CD8-positive, alpha-beta T cell (primary cell): ENCODE measurements at regions of chr5 and their contacts with region 1.

Region 1: DNA sequence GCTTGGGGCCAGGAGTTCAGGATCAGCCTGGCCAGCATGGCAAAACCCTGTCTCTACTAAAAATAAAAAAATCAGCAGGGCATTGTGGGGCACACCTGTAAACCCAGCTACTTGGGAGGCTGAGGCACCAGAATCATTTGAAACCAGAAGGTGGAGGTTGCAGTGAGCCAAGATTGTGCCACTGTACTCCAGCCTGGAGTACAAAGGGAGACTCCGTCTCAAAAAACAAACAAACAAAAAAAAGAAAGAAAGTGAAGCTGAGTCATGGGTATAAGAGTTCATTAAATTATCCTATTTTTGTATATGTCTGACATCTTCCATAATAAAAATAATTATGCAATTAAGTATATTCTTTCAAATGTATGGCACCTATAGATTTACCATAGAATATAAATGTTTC is 37.2 kb downstream of the CHD1 start:
- DNase-seq: no peak
- ATAC-seq: no peak
- H3K4me3 ChIP-seq: no peak overlapping the region
- H3K4me3 Mint-ChIP-seq: no peak overlapping the region
- H3K27ac ChIP-seq: no peak overlapping the region
- H3K27ac Mint-ChIP-seq: no peak overlapping the region
- H3K4me1 ChIP-seq: no peaks in the 10 kb centered on the region
- H3K4me1 Mint-ChIP-seq: peaks cover 2% of the 10 kb centered on the region
- H3K27me3 ChIP-seq: no peaks in the 10 kb centered on the region
- H3K27me3 Mint-ChIP-seq: no peaks in the 10 kb centered on the region
- CTCF ChIP-seq: no peak

Region 2: DNA sequence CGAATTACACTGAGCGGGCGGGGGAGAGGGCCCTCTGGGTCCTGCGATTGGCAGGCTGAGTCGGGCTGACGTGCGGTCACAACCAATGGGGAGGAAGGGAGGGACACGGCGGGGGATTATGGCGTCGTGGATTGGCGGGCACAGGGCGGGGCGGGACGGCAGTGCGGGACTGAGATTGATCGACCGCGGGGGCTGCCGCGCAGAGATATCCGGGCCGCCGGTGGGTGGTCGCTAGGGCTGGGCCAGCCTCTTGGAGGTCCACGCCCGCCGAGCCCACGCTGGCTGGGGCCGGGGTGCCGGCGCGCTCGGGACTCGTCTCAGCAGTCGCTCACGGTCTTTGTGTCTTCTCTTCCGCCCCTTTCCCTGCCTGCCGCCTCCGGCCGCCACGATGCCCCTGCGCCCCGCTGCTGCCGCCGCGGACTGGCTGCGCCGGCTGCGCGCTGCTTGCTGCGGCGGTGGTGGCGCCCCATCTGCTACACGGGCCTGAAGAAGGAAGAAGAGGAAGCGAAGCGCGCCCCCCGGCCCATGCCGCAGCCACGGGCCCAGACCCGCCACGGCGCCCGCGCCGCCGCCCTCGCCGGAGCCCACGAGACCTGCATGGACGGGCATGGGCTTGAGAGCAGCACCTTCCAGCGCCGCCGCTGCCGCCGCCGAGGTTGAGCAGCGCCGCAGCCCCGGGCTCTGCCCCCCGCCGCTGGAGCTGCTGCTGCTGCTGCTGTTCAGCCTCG is 118.0 kb before region 1 on chr5 and contains the start of gene RGMB:
- CTCF ChIA-PET with region 1: no interaction called
- POLR2A ChIA-PET with region 1: no interaction called
- intact Hi-C with region 1: no loop called
- DNase-seq: peak; percentile 71 to 92 (median 89)
- ATAC-seq: peak; percentile 86
- H3K4me3 ChIP-seq: peak within 1 kb of the TSS; percentile 69 to 70
- H3K4me3 Mint-ChIP-seq: peak within 1 kb of the TSS; percentile 95
- H3K27ac ChIP-seq: peak within 1 kb of the TSS; percentile 37 to 53
- H3K27ac Mint-ChIP-seq: peak within 1 kb of the TSS; percentile 87
- H3K4me1 ChIP-seq: peaks cover 41% of the 10 kb centered on the region
- H3K4me1 Mint-ChIP-seq: peaks cover 56% of the 10 kb centered on the region
- H3K27me3 ChIP-seq: peaks cover 0 to 12% of the 10 kb centered on the region in 2 experiments
- H3K27me3 Mint-ChIP-seq: peaks cover 24% of the 10 kb centered on the region
- CTCF ChIP-seq: no peak
- total RNA-seq, gene RGMB: 5.8 to 6.6 TPM

Region 3: GRCh38 chr5:98872674-98873073 is 18.9 kb before region 1 on chr5:
- CTCF ChIA-PET with region 1: interaction called, 3 read pairs
- POLR2A ChIA-PET with region 1: interaction called, 3 read pairs
- intact Hi-C with region 1: loop called (anchors 2 kb)
- DNase-seq: no peak
- ATAC-seq: no peak
- H3K4me3 ChIP-seq: no peak overlapping the region
- H3K4me3 Mint-ChIP-seq: no peak overlapping the region
- H3K27ac ChIP-seq: no peak overlapping the region
- H3K27ac Mint-ChIP-seq: no peak overlapping the region
- H3K4me1 ChIP-seq: no peaks in the 10 kb centered on the region
- H3K4me1 Mint-ChIP-seq: peaks cover 4% of the 10 kb centered on the region
- H3K27me3 ChIP-seq: no peaks in the 10 kb centered on the region
- H3K27me3 Mint-ChIP-seq: no peaks in the 10 kb centered on the region
- CTCF ChIP-seq: no peak

Region 4: DNA sequence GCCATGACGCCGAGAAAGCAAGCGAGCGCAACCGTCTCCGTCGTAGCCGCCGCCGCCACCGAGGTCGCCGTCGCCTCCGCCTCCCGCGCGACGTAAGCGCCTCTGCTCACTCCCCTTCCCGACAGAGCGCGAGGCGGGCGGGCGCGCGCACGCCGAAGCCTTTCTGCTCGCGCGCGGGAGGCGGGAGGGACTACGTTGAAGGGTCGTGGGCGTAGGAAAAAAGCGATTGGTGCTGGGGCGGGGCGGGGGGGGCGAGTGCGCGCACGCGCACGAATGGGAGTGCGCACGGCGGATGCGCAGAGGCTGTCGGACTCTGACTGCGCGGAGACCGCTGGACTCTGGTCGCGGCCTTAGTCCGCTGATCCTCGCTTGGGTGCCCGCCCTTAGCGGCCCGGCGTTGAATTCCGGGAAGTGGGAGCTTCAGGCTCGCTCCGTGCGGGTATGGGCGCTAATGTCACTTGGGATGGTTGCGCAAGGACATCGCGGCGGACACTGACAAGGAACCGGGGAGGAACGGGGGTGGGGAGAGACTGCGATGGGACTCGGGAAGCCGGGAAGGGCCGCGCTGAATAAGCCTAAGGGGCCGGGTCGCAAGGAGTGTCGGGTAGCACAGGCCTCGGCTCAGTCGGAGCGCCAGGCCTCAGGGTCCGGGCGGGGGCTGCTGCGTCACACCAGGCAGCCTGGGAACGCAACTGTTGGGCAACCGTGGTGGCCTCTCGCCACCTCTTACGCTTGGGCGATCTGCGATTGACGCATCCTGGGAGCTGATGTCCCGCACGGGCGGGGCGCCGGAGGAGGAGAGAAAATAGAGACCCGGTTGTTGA is 37.5 kb after region 1 on chr5 and contains the start of gene CHD1:
- CTCF ChIA-PET with region 1: no interaction called
- POLR2A ChIA-PET with region 1: no interaction called
- intact Hi-C with region 1: no loop called
- DNase-seq: peak; percentile 91 to 99 (median 94)
- ATAC-seq: peak; percentile 67
- H3K4me3 ChIP-seq: peak within 1 kb of the TSS; percentile 97 to 100
- H3K4me3 Mint-ChIP-seq: peak within 1 kb of the TSS; percentile 96
- H3K27ac ChIP-seq: peak within 1 kb of the TSS; percentile 100
- H3K27ac Mint-ChIP-seq: peak within 1 kb of the TSS; percentile 100
- H3K4me1 ChIP-seq: peaks cover 65% of the 10 kb centered on the region
- H3K4me1 Mint-ChIP-seq: peaks cover 69% of the 10 kb centered on the region
- H3K27me3 ChIP-seq: no peaks in the 10 kb centered on the region
- H3K27me3 Mint-ChIP-seq: no peaks in the 10 kb centered on the region
- CTCF ChIP-seq: no peak
- total RNA-seq, gene CHD1: 319 to 327 TPM